ENCODE measurements at regions of chr4 and their contacts with region 1.

Region 1: GRCh38 chr4:99462875-99463464 is 27.8 kb upstream of the ADH7 start:
- DNase-seq: peak; percentile 24
- ATAC-seq: peak; percentile 99
- H3K4me3 ChIP-seq: no peak overlapping the region
- H3K27ac ChIP-seq: no peak overlapping the region
- H3K4me1 ChIP-seq: no peaks in the 10 kb centered on the region
- H3K27me3 ChIP-seq: no peaks in the 10 kb centered on the region
- CTCF ChIP-seq: peak; percentile 67 to 89 (median 75); a peak in 5 of 6 replicates
- EP300 ChIP-seq: no peak
- POLR2A ChIP-seq: no peak
- RAD21 ChIP-seq: peak; percentile 96

Region 2: GRCh38 chr4:99117876-99118693 is 344.9 kb before region 1 on chr4:
- CTCF ChIA-PET with region 1: interaction called, 6 read pairs
- POLR2A ChIA-PET with region 1: no interaction called
- RAD21 ChIA-PET with region 1: interaction called, 4 read pairs
- SMC1A ChIA-PET with region 1: interaction called, 4 read pairs
- in situ Hi-C with region 1: loop called (anchors 10 kb)
- intact Hi-C with region 1: loop called (anchors 1 kb)
- DNase-seq: no peak
- ATAC-seq: no peak
- H3K4me3 ChIP-seq: no peak overlapping the region
- H3K27ac ChIP-seq: no peak overlapping the region
- H3K4me1 ChIP-seq: no peaks in the 10 kb centered on the region
- H3K27me3 ChIP-seq: no peaks in the 10 kb centered on the region
- CTCF ChIP-seq: peak in 2 of 3 experiments; percentile 14 to 22; a peak in 1 of 6 replicates
- EP300 ChIP-seq: no peak
- POLR2A ChIP-seq: no peak
- RAD21 ChIP-seq: peak; percentile 37

Region 3: GRCh38 chr4:99414389-99414788 is 48.6 kb before region 1 on chr4:
- CTCF ChIA-PET with region 1: interaction called, 12 read pairs
- POLR2A ChIA-PET with region 1: no interaction called
- RAD21 ChIA-PET with region 1: interaction called, 4 read pairs
- SMC1A ChIA-PET with region 1: interaction called, 7 read pairs
- in situ Hi-C with region 1: no loop called
- intact Hi-C with region 1: no loop called
- DNase-seq: no peak
- ATAC-seq: no peak
- H3K4me3 ChIP-seq: no peak overlapping the region
- H3K27ac ChIP-seq: no peak overlapping the region
- H3K4me1 ChIP-seq: no peaks in the 10 kb centered on the region
- H3K27me3 ChIP-seq: no peaks in the 10 kb centered on the region
- CTCF ChIP-seq: no peak
- EP300 ChIP-seq: no peak
- POLR2A ChIP-seq: no peak
- RAD21 ChIP-seq: no peak